Activated CD4-positive, alpha-beta T cell treated with anti-CD3 and anti-CD28 coated beads for 36 hours (primary cell): ENCODE measurements at regions of chr1 and their contacts with region 1.

Region 1: DNA sequence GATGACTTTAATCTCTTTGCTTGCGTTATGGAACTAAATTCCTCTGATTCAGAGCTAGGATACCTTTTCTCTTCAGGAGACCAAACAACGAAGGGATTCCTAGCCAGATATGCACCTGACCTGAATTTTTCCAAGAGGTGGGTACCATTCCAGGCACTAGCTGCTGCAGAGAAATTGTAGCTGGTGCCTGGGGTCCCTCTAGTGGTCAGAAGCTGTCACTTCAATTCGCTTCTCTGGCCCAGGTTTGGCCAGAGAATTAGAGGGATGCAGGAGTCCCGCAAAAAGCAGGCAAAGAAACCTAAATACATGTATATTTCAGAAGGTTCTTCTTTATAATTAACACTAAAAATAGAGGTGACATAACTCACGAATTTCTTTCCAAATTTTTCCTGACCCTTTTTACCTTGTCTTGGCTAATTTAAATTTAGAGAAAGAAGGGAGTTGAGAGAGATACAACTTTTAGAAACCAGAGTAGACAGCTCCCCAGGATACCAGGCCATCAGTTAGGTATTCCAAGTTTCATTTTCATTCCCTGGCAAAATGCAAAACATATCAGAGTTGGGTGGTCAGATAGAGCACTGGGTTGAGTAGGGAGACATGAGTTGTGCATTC is 9.6 kb downstream of the ACKR1 start:
- DNase-seq: peak; percentile 59
- ATAC-seq: no peak
- H3K4me3 Mint-ChIP-seq: no peak overlapping the region
- H3K27ac Mint-ChIP-seq: no peak overlapping the region
- H3K4me1 Mint-ChIP-seq: no peaks in the 10 kb centered on the region
- H3K27me3 Mint-ChIP-seq: peaks cover 36% of the 10 kb centered on the region

Region 2: DNA sequence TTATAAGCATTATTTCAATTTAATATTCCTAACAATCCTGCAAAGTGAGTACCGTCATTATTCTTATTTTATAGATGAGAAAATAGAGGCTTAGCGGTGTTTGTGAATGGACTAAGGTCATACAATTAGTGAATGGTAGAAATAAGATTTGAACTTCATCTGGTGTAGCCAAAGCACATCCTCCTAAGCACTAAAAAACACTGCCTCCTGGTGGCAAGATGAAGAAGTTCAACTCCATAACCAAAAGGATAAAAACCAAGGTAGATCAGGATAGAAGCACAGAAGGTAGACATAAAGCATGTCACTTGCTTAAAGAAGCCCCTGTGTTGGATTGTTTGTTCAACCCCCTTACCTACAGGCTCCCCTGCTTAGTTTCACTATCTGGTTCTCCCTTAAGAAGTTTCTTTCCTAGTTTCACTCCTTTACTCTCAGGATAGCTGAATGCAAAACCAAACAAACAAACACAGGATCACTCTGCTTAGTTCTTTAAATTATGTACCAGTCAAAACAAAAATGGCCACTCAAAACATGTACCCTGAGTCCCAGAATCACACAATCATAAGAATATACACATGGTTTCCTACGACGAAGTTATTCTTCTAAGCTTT is 125.0 kb before region 1 on chr1:
- CTCF ChIA-PET with region 1: interaction called, 10 read pairs
- POLR2A ChIA-PET with region 1: no interaction called
- intact Hi-C with region 1: no loop called
- DNase-seq: no peak
- ATAC-seq: peak; percentile 37
- H3K4me3 Mint-ChIP-seq: no peak overlapping the region
- H3K27ac Mint-ChIP-seq: peak overlapping the region; percentile 78
- H3K4me1 Mint-ChIP-seq: peaks cover 51% of the 10 kb centered on the region
- H3K27me3 Mint-ChIP-seq: peaks cover 2% of the 10 kb centered on the region

Region 3: DNA sequence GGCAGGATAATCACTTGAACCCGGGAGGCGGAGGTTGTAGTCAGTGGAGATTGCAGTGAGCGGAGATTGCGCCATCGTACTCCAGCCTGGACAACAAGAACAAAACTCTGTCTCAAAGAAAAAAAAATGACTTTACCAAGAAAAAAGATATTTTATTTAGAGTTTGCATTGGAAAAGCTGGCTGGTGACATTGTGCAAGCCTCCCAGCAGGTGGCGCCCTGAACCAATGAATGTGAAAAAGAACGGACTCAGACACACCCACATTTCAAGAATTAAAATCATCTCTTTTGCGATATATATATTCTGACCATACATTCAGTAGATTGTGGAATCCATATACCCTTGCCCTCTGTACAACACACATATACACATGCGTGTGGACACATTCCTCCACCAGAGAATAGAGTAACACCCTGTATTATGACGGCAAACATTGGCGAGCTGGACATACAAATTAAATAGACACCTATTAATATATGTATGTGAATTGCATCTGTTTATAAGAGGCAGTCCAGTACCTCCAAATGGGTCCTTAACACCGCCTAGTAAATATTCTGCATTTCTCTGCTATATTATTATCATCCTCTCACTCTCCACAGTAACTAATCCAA is 81.9 kb before region 1 on chr1:
- CTCF ChIA-PET with region 1: interaction called, 132 read pairs
- POLR2A ChIA-PET with region 1: interaction called, 4 read pairs
- intact Hi-C with region 1: loop called (anchors 1 kb)
- DNase-seq: peak; percentile 87
- ATAC-seq: peak; percentile 51
- H3K4me3 Mint-ChIP-seq: no peak overlapping the region
- H3K27ac Mint-ChIP-seq: no peak overlapping the region
- H3K4me1 Mint-ChIP-seq: no peaks in the 10 kb centered on the region
- H3K27me3 Mint-ChIP-seq: peaks cover 5% of the 10 kb centered on the region

Region 4: GRCh38 chr1:159161001-159161718 is 53.1 kb before region 1 on chr1:
- CTCF ChIA-PET with region 1: interaction called, 72 read pairs
- POLR2A ChIA-PET with region 1: no interaction called
- intact Hi-C with region 1: loop called (anchors 1 kb)
- DNase-seq: peak; percentile 82
- ATAC-seq: peak; percentile 83
- H3K4me3 Mint-ChIP-seq: no peak overlapping the region
- H3K27ac Mint-ChIP-seq: no peak overlapping the region
- H3K4me1 Mint-ChIP-seq: peaks cover 2% of the 10 kb centered on the region
- H3K27me3 Mint-ChIP-seq: peaks cover 39% of the 10 kb centered on the region

Region 5: GRCh38 chr1:159229486-159229885 is 15.2 kb after region 1 on chr1:
- CTCF ChIA-PET with region 1: interaction called, 60 read pairs
- POLR2A ChIA-PET with region 1: no interaction called
- intact Hi-C with region 1: no loop called
- DNase-seq: no peak
- ATAC-seq: no peak
- H3K4me3 Mint-ChIP-seq: no peak overlapping the region
- H3K27ac Mint-ChIP-seq: no peak overlapping the region
- H3K4me1 Mint-ChIP-seq: no peaks in the 10 kb centered on the region
- H3K27me3 Mint-ChIP-seq: peaks cover 17% of the 10 kb centered on the region